ENCODE measurements at regions of chr1 and their contacts with region 1.

Region 1: DNA sequence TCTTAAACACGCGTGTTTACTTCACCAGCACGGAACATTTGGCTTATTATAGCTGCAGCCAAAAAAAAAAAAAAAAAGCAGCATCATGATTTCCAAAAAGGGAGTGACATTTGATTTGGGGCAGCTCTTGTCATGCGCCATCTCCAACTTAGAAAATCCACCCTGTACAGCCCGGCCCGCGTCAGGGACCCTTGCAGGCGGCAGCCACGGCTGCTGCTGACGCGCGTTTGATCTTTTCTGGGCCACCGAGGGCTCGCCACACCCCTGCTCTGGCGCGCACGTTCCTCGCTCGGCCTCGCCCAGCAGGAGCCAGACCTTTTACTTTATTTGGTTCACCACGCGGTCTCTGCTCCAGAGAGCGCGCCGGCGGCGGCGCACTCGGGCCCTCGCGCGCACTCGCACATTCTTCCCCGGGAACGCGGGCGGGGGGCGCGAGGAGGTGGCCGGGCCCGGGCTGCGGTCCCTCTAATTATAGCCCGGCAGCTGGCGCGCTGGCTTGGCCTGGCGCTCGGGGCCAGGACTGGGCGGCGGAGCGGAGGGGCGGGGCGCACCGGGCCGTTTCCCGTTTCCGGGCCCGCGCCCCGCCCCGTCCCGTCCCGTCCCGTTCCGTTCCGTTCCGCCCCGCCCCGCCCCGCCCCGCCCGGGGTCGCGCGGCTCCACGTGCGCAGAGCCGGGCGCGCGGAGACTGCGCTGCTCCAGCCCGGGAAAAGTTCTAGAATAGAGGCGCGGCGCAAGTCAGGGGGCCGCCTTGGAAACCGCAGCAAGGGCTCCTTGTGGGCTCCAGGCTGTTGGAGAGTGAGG is 10.2 kb downstream of the IRF2BP2 start:
- DNase-seq: peak; percentile 85 to 92 (median 90)
- ATAC-seq: peak; percentile 77 to 86 (median 84)
- H3K4me3 ChIP-seq: peak overlapping the region; percentile 14 to 57 (median 35)
- H3K27ac ChIP-seq: peak overlapping the region; percentile 92 to 99 (median 96)
- H3K4me1 ChIP-seq: peaks cover 33 to 45% (median 38%) of the 10 kb centered on the region in 3 donors
- H3K27me3 ChIP-seq: no peaks in the 10 kb centered on the region
- CTCF ChIP-seq: no peak

Region 2: GRCh38 chr1:234458352-234459017 is 141.3 kb before region 1 on chr1:
- intact Hi-C with region 1: no loop called
- DNase-seq: no peak
- ATAC-seq: peak in 1 of 4 donors; percentile 24
- H3K4me3 ChIP-seq: no peak overlapping the region
- H3K27ac ChIP-seq: no peak overlapping the region
- H3K4me1 ChIP-seq: peaks cover 0 to 1% (median 0%) of the 10 kb centered on the region in 3 donors
- H3K27me3 ChIP-seq: no peaks in the 10 kb centered on the region
- CTCF ChIP-seq: no peak

Region 3: GRCh38 chr1:234509452-234510328 is 90.1 kb before region 1 on chr1:
- intact Hi-C with region 1: loop called in 1 of 3 experiments (anchors 5 kb)
- DNase-seq: peak in 2 of 6 donors; percentile 39 to 55
- ATAC-seq: peak; percentile 56 to 78 (median 72)
- H3K4me3 ChIP-seq: no peak overlapping the region
- H3K27ac ChIP-seq: peak overlapping the region in 1 of 4 donors; percentile 27
- H3K4me1 ChIP-seq: peaks cover 7 to 8% (median 8%) of the 10 kb centered on the region in 3 donors
- H3K27me3 ChIP-seq: no peaks in the 10 kb centered on the region
- CTCF ChIP-seq: no peak

Region 4: DNA sequence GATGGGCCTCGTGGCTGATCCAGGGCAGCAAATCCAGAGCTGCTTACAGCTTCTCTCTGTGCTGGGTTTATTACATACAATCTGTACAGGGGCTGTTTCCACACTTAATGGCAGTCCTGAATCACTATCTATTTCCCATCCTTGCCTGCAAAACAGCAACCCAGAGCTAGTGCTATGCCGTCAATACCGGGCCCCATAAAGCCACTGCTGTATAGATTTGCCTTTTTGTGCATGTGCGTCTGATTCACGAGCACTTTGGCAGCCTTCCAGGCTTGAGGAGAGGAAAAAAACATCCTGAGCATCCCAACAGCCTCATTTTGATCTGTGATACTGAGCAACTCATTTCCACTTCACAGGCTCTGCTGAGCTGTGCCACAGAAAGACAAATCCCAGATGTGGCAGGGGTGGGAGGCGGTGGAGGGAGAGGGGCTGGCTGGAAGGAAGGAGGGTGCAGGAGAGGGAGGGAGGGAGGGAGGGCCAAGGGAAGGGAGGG is 55.7 kb before region 1 on chr1:
- intact Hi-C with region 1: loop called in 1 of 3 experiments (anchors 10 kb)
- DNase-seq: peak in 2 of 6 donors; percentile 58 to 63
- ATAC-seq: peak; percentile 38 to 64 (median 56)
- H3K4me3 ChIP-seq: no peak overlapping the region
- H3K27ac ChIP-seq: peak overlapping the region; percentile 71 to 92 (median 82)
- H3K4me1 ChIP-seq: peaks cover 26 to 30% (median 26%) of the 10 kb centered on the region in 3 donors
- H3K27me3 ChIP-seq: no peaks in the 10 kb centered on the region
- CTCF ChIP-seq: no peak

Region 5: GRCh38 chr1:235075188-235075926 is 475.5 kb after region 1 on chr1:
- intact Hi-C with region 1: loop called in 1 of 3 experiments (anchors 10 kb)
- DNase-seq: peak in 5 of 6 donors; percentile 57 to 73 (median 62)
- ATAC-seq: peak in 3 of 4 donors; percentile 7 to 51 (median 11)
- H3K4me3 ChIP-seq: no peak overlapping the region
- H3K27ac ChIP-seq: peak overlapping the region; percentile 90 to 98 (median 96)
- H3K4me1 ChIP-seq: peaks cover 37 to 72% (median 64%) of the 10 kb centered on the region in 3 donors
- H3K27me3 ChIP-seq: no peaks in the 10 kb centered on the region
- CTCF ChIP-seq: no peak

Measured in pancreas (tissue), 10 donors.